ENCODE measurements at regions of chr6 and their contacts with region 1.

Region 1: DNA sequence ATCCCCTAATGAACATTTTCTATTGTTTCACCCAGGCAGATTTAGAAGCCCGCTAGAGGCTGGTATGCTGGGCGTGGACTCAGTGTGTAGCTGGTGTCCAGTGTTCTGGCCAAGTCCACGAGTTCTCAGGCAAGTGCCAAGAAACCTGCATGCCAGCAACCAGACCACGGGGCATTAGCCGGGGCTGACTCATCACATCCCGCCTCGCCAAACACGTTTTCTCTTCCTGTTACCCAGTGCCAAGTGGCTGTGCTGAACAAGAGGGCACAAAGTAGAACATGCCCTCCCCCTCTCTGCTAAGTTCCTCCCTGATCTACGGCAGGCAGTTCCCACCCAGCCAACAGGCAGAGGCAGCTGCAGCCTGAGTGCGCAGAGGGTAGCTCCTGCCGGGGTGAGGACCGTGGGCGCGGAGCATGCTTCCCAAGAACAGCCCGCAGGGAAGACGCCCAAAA is 29.6 kb downstream of the RAMACL start:
- DNase-seq: peak; percentile 94
- ATAC-seq: peak; percentile 97
- H3K4me3 ChIP-seq: peak overlapping the region; percentile 17
- H3K27ac ChIP-seq: peak overlapping the region; percentile 81
- H3K4me1 ChIP-seq: peaks cover 45% of the 10 kb centered on the region
- H3K27me3 ChIP-seq: no peaks in the 10 kb centered on the region
- CTCF ChIP-seq: no peak

Region 2: DNA sequence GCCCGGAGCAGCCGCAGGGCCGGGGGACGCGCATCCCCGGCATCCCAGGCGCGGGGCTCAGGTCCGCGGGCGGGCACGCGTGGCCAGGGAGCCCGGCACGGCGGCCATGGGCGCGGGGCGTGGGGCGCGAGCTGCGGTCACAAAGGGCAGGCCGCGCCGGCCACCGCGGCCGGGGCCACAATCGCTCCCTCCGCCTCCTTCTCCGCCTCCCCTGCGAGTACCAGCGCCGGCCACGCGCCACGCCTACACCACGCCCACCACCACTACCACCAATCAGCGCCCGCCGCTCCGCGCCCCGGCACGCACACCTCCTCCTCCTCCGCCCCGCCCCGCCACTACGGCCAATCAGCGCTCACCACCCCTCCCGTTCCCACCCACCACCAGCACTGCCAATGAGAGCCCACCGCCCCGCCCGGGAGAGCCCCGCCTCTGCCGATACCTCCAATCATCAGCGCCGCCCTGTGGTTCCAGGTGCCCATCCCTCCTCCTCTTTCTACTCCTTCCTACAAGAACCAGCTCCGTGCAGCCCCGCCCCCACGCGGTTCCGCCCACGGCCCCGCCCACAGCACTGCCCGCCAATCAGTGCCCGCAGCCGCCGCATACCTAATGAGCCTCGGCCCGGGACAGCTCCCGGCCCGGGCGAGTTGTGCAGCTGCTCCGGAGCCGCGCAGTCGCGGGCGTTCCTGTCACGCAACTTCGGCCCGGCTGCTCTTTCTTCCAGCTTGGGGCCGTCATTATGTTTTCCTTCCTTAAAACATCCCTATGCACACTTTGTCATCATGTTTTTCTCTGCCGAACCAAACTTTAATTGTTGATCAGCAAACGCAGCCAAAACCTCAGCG is 70.4 kb after region 1 on chr6 and contains the start of gene RPS6KA2:
- intact Hi-C with region 1: loop called (anchors 10 kb)
- DNase-seq: peak; percentile 100
- ATAC-seq: peak; percentile 93 to 96
- H3K4me3 ChIP-seq: peak within 1 kb of the TSS; percentile 82
- H3K27ac ChIP-seq: peak within 1 kb of the TSS; percentile 92
- H3K4me1 ChIP-seq: peaks cover 49% of the 10 kb centered on the region
- H3K27me3 ChIP-seq: no peaks in the 10 kb centered on the region
- CTCF ChIP-seq: no peak
- total RNA-seq, gene RPS6KA2: 102 TPM

Measured in lower lobe of right lung (tissue), 2 donors.